GM10248 (cell line): ENCODE measurements at regions of chr12 and their contacts with region 1.

Region 1: GRCh38 chr12:50111693-50112455 is at the start of gene COX14:
- DNase-seq: peak; percentile 96
- CTCF ChIP-seq: peak; percentile 91

Region 2: DNA sequence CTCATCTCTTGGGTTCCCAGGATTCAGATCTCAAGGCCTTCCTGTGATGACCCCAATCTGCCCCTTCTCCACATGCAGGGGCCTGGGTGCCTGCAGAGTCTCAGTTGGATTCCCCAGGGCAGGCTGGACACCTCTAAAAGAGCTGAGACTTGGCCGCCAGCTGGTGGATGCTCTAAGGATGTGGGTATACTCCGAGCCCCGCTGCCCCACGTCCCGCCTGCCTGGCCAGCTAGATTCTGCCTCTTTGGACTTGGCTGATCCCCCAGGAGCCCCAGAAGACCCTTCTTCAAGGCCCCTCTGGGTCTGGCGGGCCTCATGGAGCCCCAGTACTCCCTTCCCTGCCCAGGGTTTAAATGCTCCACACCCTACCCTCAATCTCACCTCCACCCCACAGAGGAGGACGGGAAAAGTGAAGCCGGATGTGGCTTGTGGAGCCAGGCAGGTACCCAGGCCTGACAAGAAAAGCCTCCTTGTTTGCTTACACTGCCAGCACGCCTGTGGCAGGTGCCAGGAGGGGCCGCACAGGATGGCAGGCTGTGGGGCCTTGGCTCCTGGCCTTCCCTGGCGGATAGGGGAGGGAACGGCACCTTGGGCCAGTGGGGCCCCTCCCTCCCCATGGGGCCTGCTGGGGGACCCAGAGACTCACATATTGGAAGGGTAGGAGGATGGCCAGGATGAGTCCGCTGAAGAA is 223.3 kb before region 1 on chr12:
- CTCF ChIA-PET with region 1: no interaction called
- POLR2A ChIA-PET with region 1: no interaction called
- DNase-seq: no peak
- CTCF ChIP-seq: no peak

Region 3: DNA sequence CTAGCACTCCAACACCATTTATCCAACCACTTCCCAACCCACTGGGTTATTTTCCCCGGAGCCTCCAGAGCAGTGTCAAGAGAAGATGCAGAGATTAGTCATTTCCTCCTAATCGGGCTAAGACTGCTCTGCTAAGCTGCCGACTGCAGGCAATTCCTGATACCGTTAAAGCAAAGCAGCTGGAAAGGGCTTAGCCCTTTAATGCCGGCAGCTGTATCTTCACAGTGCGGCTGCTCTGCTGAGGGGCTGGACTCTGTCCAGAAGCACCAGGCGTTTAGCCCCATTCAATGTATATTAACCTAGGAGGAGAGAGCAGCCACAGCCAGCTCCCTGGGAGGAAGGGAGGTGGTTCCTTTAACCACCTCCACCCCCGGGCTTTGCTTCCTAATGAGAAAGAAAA is 128.0 kb before region 1 on chr12:
- CTCF ChIA-PET with region 1: no interaction called
- POLR2A ChIA-PET with region 1: no interaction called
- DNase-seq: peak; percentile 11
- CTCF ChIP-seq: no peak

Region 4: DNA sequence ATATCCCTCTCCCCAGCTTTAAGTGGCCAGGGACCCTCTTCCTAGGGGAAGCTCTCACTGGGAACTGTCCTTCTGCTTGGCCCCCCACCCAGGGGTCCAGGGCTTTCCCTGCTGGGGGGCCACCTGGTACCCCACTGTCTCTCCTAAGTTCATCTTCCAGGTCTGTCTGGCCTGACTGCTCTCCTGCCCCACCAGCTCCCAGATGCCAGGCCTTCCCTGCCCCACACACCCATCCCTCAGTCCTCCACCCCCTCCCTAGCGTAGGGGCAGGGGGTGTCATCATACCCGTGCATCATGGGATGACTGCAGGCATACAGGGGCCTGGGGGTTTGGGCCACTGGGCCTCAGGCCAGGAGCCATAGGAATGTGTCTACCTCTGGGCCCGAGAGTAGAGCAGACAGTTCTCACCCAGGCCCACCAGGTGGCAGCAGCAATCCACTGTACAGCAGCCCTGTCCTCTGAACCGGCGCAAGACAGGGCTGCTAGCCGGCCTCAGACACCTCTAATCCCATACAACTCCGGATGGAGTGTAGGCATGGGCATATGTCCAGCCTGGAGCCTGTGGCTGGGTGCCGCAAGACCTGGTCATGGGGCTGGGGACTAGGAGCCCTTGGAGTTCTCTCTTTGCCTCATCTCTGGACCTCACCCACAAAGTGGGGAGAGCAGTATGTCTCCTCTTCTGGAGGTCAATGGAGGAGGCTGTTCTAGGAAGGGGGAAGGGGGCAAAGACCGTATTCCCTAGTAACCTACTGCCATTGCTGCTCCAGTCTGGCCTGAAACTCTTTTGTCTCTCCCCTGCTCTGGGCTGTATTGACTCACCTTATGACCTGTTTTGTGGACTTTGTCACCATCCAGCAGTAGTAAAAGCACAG is 36.7 kb before region 1 on chr12:
- CTCF ChIA-PET with region 1: interaction called, 43 read pairs
- POLR2A ChIA-PET with region 1: no interaction called
- DNase-seq: peak; percentile 89
- CTCF ChIP-seq: peak; percentile 94

Region 5: DNA sequence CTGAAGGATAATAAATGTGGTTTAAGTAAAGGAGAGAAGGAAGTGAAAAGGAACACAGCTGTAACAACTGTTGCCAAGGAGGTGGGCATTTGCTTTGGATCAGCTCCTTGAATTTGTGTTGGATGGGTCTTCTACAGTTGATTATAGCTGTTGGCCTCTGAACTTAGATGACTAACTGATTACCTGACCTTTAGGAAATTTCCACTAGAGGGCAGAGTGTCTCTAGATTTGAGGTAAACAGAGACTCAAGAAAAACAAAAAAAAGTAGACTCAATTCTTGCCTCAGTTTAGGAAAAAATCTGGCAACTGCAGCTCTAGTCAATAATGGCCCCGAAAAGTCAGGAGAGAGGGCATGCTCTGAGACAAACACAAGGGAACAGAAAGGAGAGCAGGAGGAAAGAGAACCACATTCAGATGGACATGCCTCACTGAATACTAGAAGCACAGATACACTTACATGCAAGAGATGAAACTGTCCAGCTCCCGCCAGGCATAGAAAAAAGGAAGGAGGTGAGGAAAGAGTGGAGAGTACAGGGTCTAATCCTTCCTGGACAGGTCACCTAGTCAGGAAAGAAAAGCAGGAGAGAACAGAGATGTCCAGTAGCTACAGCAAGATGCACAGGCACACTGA is 20.7 kb after region 1 on chr12:
- CTCF ChIA-PET with region 1: interaction called, 296 read pairs
- POLR2A ChIA-PET with region 1: interaction called, 16 read pairs
- DNase-seq: peak; percentile 42
- CTCF ChIP-seq: peak; percentile 59

Region 6: GRCh38 chr12:50151047-50151687 is 39.3 kb after region 1 on chr12:
- CTCF ChIA-PET with region 1: interaction called, 54 read pairs
- POLR2A ChIA-PET with region 1: no interaction called
- DNase-seq: no peak
- CTCF ChIP-seq: no peak

Region 7: DNA sequence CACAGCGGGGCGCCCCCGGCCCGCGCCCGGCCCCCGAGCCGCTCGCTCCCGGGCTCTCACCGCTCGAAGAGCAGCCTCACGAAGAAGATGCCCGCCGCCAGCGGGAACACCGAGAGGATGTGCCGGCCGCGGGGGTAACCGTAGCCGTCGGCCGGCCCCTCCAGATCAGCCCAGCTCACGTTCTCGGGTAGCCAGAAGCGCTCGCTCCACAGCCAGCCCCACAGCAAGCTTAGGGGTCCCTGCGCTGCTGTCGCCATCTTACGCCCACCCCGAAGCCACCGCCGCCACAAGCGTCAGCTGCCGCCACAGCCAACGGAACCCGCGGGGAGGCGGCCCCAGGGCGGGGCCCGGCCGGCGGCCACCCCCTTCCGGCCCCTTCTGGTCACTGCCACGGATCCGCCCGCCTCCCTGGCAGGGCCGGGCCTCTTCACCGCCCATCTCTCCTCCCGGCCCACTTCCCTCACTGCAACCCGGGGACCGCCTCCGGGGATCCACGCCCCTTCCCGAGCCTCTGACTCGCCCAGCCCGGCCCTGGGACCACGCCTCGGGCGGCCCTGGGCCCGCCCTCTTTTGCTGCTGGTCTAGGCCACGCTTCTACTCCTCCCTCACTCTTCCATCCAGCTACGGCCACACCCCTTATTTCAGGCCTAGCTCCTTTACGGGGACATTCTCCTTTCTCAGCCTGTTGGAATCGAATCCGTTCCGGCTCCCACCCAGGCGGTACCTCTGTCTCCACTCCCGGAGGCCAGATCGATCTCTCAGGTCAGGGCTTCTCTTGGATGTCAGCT is 55.4 kb after region 1 on chr12 and contains the start of gene CERS5:
- CTCF ChIA-PET with region 1: interaction called, 91 read pairs
- POLR2A ChIA-PET with region 1: interaction called, 6 read pairs
- DNase-seq: peak; percentile 100
- CTCF ChIP-seq: no peak

Region 8: GRCh38 chr12:50187084-50187900 is 75.4 kb after region 1 on chr12:
- CTCF ChIA-PET with region 1: interaction called, 16 read pairs
- POLR2A ChIA-PET with region 1: no interaction called
- DNase-seq: peak; percentile 52
- CTCF ChIP-seq: no peak

Region 9: GRCh38 chr12:50314629-50315312 is 202.9 kb after region 1 on chr12:
- CTCF ChIA-PET with region 1: interaction called, 10 read pairs
- POLR2A ChIA-PET with region 1: no interaction called
- DNase-seq: peak; percentile 57
- CTCF ChIP-seq: peak; percentile 50